Activated B cell treated with CpG ODN at 0.5 μM for 24 hours (primary cell): ENCODE measurements at regions of chr5 and their contacts with region 1.

Region 1: GRCh38 chr5:59799668-59800346 is 93.7 kb downstream of the PDE4D start:
- DNase-seq: no peak
- ATAC-seq: peak; percentile 60
- H3K4me3 Mint-ChIP-seq: no peak overlapping the region
- H3K27ac Mint-ChIP-seq: no peak overlapping the region
- H3K4me1 Mint-ChIP-seq: peaks cover 10% of the 10 kb centered on the region
- H3K27me3 Mint-ChIP-seq: no peaks in the 10 kb centered on the region
- CTCF ChIP-seq: peak; percentile 91

Region 2: DNA sequence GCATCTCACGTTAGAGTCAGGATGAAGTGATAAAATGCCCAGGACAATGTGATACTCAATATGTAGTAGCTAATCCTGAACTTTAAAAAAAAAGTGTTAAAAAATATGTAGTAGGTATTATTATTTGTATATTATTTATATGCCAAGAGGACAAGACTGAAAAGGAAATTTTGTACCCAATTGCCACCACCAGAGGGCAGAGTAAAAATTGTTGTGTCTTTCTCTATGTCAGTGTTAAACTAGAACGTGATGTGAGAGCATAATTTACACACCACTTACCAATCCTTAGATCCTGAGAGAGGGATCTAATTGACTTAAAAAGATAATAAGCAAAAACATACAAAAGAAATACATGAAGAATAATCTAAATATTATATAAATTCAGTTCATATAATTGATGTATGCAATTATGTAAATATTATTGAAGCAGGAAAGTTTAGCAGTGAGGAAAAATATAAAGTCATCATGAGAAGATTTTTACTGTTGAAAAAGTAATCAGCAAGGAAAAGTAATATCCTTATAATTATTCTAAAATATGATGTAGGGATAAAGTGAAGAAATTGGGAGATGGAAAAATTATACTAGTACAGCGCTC is 928.1 kb before region 1 on chr5:
- CTCF ChIA-PET with region 1: interaction called, 5 read pairs
- POLR2A ChIA-PET with region 1: no interaction called
- intact Hi-C with region 1: loop called (anchors 1 kb)
- DNase-seq: no peak
- ATAC-seq: no peak
- H3K4me3 Mint-ChIP-seq: no peak overlapping the region
- H3K27ac Mint-ChIP-seq: no peak overlapping the region
- H3K4me1 Mint-ChIP-seq: no peaks in the 10 kb centered on the region
- H3K27me3 Mint-ChIP-seq: peaks cover 10% of the 10 kb centered on the region
- CTCF ChIP-seq: peak; percentile 93

Region 3: GRCh38 chr5:59188419-59189225 is 611.2 kb before region 1 on chr5:
- CTCF ChIA-PET with region 1: interaction called, 5 read pairs
- POLR2A ChIA-PET with region 1: no interaction called
- intact Hi-C with region 1: loop called (anchors 1 kb)
- DNase-seq: peak; percentile 21
- ATAC-seq: peak; percentile 54
- H3K4me3 Mint-ChIP-seq: peak overlapping the region; percentile 48
- H3K27ac Mint-ChIP-seq: no peak overlapping the region
- H3K4me1 Mint-ChIP-seq: peaks cover 6% of the 10 kb centered on the region
- H3K27me3 Mint-ChIP-seq: peaks cover 3% of the 10 kb centered on the region
- CTCF ChIP-seq: peak; percentile 94

Region 4: GRCh38 chr5:59506285-59506877 is 293.4 kb before region 1 on chr5:
- CTCF ChIA-PET with region 1: interaction called, 59 read pairs
- POLR2A ChIA-PET with region 1: no interaction called
- intact Hi-C with region 1: loop called (anchors 1 kb)
- DNase-seq: no peak
- ATAC-seq: no peak
- H3K4me3 Mint-ChIP-seq: no peak overlapping the region
- H3K27ac Mint-ChIP-seq: no peak overlapping the region
- H3K4me1 Mint-ChIP-seq: no peaks in the 10 kb centered on the region
- H3K27me3 Mint-ChIP-seq: no peaks in the 10 kb centered on the region
- CTCF ChIP-seq: no peak

Region 5: DNA sequence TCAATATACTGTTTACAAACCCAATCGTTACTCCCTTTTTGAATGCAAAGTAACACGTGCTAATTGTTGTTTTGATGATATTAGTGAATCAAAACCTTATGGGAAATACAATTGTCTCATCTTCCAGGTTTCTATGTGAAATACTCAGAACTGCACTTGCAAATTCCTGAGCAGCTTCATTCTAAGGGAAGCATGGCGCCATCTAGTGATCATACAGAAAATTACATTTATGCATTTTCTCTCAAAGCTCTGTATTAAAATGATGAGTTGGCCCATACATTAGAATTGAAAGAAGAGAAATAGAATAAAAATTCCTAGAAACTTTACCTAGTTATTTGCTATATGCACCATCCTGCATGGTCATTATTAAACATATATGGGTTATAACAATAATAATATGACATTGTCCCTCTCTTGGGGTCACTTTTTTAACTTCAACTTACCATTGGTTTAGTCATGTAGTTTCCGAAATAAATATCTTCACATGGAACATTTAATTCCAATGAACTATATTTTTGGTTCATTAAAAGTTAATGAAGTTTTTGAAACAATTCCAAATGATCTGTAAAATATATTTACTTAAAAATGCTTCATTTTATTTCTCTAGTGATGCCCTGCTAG is 126.3 kb before region 1 on chr5:
- CTCF ChIA-PET with region 1: interaction called, 21 read pairs
- POLR2A ChIA-PET with region 1: no interaction called
- intact Hi-C with region 1: loop called (anchors 1 kb)
- DNase-seq: no peak
- ATAC-seq: peak; percentile 28
- H3K4me3 Mint-ChIP-seq: no peak overlapping the region
- H3K27ac Mint-ChIP-seq: no peak overlapping the region
- H3K4me1 Mint-ChIP-seq: peaks cover 10% of the 10 kb centered on the region
- H3K27me3 Mint-ChIP-seq: no peaks in the 10 kb centered on the region
- CTCF ChIP-seq: peak; percentile 75

Region 6: GRCh38 chr5:59810041-59810440 is 10.2 kb after region 1 on chr5:
- CTCF ChIA-PET with region 1: interaction called, 19 read pairs
- POLR2A ChIA-PET with region 1: no interaction called
- intact Hi-C with region 1: no loop called
- DNase-seq: peak; percentile 48
- ATAC-seq: peak; percentile 73
- H3K4me3 Mint-ChIP-seq: peak overlapping the region; percentile 64
- H3K27ac Mint-ChIP-seq: no peak overlapping the region
- H3K4me1 Mint-ChIP-seq: peaks cover 10% of the 10 kb centered on the region
- H3K27me3 Mint-ChIP-seq: peaks cover 4% of the 10 kb centered on the region
- CTCF ChIP-seq: peak; percentile 25

Region 7: DNA sequence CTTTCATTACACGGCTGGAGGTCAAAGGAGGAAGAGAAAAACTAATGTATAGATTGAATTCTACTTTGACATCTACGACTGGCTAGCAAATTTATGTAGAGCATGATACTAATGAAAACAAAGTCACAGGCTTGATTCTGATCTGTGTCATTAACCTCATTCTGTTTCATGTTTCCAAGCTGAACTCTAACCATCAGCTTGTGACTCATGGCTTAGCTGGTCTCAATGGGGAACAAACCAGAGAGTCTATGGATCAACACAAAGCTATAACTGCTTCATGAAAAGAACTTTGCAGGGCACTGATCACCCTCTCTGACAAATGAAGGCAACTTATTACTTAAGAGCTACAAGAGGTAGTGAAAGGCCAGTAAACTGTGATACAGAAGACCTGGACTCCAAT is 117.3 kb after region 1 on chr5:
- CTCF ChIA-PET with region 1: no interaction called
- POLR2A ChIA-PET with region 1: no interaction called
- intact Hi-C with region 1: no loop called
- DNase-seq: no peak
- ATAC-seq: no peak
- H3K4me3 Mint-ChIP-seq: no peak overlapping the region
- H3K27ac Mint-ChIP-seq: no peak overlapping the region
- H3K4me1 Mint-ChIP-seq: no peaks in the 10 kb centered on the region
- H3K27me3 Mint-ChIP-seq: no peaks in the 10 kb centered on the region
- CTCF ChIP-seq: no peak

Region 8: DNA sequence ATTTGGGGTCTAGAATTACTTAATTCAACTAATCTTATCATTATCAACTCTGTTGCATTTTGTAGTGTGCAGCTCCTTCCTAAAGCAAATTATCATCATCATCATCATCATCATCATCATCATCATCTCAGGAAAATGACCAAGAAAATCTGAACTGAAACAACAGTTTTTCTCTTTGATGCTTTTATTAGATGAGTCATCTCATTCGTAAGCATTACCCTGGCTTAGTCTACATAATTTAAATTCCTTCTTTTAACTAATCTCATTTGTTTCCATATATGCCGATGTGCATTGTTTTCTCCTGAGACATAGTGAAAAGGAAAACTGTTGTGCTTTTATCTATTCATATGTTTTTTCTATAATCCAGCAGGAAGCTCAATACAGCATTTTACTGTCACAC is 266.7 kb after region 1 on chr5:
- CTCF ChIA-PET with region 1: no interaction called
- POLR2A ChIA-PET with region 1: no interaction called
- intact Hi-C with region 1: no loop called
- DNase-seq: no peak
- ATAC-seq: no peak
- H3K4me3 Mint-ChIP-seq: no peak overlapping the region
- H3K27ac Mint-ChIP-seq: no peak overlapping the region
- H3K4me1 Mint-ChIP-seq: no peaks in the 10 kb centered on the region
- H3K27me3 Mint-ChIP-seq: no peaks in the 10 kb centered on the region
- CTCF ChIP-seq: no peak